ENCODE measurements at regions of chr1 and their contacts with region 1.

Region 1: DNA sequence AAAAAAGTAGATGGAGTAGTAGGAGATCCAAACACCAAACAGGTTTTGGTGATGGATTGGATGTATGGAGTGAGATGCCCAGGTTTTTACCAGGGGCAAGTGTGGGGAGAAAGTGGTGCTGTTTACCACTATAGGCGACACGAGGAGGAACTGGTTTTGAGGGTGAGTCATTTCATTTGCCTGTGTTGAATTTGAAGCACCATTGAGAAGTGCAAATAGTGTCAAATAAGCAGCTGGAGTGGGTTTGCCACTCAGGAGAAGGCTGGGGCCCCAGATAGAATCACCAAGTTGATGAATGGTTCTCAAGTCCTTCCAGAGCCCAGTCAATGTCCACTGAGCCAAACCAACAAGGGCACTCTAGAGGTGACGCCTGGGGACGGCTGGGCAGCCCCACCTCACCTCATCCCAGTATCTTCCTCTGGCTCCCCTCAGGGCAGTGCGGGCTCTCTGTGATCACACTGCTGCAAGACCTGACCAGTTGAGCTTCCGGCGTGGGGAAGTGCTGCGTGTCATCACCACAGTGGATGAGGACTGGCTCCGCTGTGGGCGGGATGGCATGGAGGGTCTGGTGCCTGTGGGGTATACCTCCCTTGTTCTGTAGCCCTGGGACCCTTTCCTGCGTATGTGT is 9.4 kb downstream of the RUSC1 start:
- DNase-seq: no peak
- ATAC-seq: no peak

Region 2: GRCh38 chr1:155562581-155563376 is 232.7 kb after region 1 on chr1 and contains the start of gene ASH1L:
- intact Hi-C with region 1: loop called in 1 of 2 experiments (anchors 10 kb)
- DNase-seq: peak; percentile 93 to 94
- ATAC-seq: peak; percentile 86
- total RNA-seq, gene ASH1L: 50.4 to 53.9 TPM